ENCODE measurements at regions of chr10 and their contacts with region 1.

Region 1: GRCh38 chr10:114304017-114304570 is 65.0 kb downstream of the VWA2 start:
- DNase-seq: peak; percentile 85
- ATAC-seq: peak; percentile 59
- H3K4me3 Mint-ChIP-seq: peak overlapping the region; percentile 87
- H3K27ac Mint-ChIP-seq: peak overlapping the region; percentile 69
- H3K4me1 Mint-ChIP-seq: peaks cover 13% of the 10 kb centered on the region
- H3K27me3 Mint-ChIP-seq: no peaks in the 10 kb centered on the region

Region 2: DNA sequence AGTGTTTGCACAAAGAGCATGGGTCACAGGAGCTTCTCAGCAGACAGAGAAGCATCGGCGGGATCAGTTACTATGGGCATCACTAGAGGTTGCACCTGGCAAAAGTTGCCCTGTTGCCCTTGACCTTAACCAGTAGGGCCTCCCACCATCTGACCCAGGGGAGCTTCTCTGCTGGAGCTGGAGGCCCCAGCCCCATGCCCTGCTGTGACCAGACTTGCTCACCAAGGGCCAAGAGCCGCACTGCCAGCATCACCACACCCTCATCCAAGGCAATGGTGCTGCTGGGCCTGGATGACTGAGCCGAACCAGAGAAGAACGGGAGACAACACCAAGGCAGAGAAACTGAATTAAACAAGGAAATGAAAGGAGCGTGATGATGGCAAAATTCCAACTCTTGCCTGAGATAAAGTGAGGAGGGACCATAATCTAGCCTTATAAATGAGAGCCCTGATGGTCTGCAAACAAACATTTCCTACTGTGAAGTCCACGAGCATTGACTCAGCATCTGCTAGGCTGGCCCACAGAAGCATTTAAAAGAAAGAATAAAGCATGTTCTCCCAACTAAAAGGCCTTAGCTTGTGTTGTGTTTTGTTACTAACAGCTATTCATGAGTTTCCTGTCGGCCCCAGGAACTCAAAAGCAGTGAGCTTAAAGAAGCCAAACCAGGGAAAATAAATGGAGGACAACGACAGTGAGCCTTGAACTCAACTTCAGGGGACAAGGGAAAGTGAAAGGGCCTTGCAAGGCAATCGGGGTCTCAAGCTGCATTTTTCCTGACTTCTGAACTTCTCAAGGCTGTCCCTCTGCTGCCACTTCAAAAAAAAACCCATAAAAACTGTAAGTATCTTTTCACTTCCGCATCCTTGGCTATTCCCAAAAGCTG is 39.8 kb after region 1 on chr10:
- CTCF ChIA-PET with region 1: interaction called, 14 read pairs
- POLR2A ChIA-PET with region 1: no interaction called
- DNase-seq: no peak
- ATAC-seq: no peak
- H3K4me3 Mint-ChIP-seq: no peak overlapping the region
- H3K27ac Mint-ChIP-seq: no peak overlapping the region
- H3K4me1 Mint-ChIP-seq: no peaks in the 10 kb centered on the region
- H3K27me3 Mint-ChIP-seq: no peaks in the 10 kb centered on the region

Region 3: GRCh38 chr10:114427124-114427852 is 123.2 kb after region 1 on chr10:
- CTCF ChIA-PET with region 1: interaction called, 44 read pairs
- POLR2A ChIA-PET with region 1: interaction called, 3 read pairs
- DNase-seq: no peak
- ATAC-seq: no peak
- H3K4me3 Mint-ChIP-seq: no peak overlapping the region
- H3K27ac Mint-ChIP-seq: no peak overlapping the region
- H3K4me1 Mint-ChIP-seq: no peaks in the 10 kb centered on the region
- H3K27me3 Mint-ChIP-seq: peaks cover 3% of the 10 kb centered on the region

Region 4: DNA sequence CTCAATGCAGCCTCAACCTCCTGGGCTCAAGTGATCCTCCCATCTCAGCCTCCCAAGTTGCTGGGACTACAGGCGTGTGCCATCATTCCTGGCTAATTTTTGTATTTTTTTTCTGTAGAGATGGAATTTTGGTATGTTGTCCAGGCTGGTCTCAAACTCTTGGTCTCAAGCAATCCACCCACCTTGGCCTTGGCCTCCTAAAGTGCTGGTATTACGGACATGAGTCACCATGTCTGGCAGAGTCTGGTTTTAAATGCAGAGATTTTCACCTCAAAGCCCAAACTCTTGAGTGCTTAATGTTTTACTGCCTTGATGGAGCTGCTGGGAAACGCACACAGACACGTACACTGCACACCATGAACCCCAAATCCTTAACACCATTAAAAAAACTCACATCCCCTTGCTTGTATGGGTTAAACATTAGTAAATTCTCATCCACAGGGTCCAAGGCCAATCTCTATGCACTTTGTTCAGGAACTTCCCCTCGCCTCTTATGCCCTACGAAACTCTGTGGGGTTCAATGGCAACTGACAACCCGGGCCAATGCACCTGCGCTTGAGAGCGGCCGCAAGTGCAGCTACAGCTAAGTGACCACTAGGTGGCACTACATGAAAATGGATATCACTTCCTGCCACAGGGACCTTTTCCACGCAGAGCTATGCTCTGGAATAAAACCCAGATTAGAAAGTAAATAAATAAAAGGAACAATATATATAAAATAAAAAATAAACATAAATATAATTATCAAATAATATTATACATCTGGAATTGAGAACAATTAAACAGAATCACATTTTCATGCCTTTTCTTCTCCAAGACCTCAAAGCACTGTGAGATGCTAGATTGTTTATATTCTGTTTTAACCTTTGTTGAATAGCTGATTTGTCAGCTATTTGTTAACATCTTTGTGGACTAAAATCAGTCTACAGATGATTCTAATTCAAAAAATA is 167.1 kb after region 1 on chr10:
- CTCF ChIA-PET with region 1: interaction called, 43 read pairs
- POLR2A ChIA-PET with region 1: no interaction called
- DNase-seq: peak; percentile 77
- ATAC-seq: peak; percentile 95
- H3K4me3 Mint-ChIP-seq: no peak overlapping the region
- H3K27ac Mint-ChIP-seq: no peak overlapping the region
- H3K4me1 Mint-ChIP-seq: peaks cover 16% of the 10 kb centered on the region
- H3K27me3 Mint-ChIP-seq: no peaks in the 10 kb centered on the region

Region 5: DNA sequence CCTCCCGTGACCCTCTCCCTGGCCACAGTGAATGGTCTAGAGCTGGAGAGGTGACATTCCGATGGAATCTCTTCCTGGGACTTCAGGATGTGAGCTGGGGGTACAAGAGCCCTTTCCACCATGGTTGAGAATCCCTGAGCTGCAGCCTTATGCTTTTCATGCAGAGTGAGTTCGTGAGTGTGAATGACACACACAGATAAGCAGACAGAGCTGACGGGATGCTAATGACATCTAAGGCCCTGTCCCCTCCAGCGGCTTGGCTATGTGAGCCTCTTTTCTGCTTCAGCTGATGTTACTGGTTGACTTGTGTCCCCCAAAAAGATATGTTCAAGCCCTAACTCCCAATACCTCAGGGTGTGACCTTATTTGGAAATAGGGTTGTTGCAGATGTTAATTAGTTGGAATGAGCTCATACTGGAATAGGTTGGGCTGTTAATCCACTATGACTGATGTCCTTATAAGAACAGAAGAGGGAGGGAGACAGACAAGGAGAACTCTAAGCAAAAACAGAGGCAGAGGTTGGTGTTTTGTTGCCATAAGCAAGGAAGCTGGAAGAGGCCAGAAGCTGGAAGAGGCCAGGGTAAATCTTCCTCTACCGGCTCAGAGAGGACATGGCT is 211.3 kb after region 1 on chr10:
- CTCF ChIA-PET with region 1: interaction called, 10 read pairs
- POLR2A ChIA-PET with region 1: no interaction called
- DNase-seq: no peak
- ATAC-seq: no peak
- H3K4me3 Mint-ChIP-seq: no peak overlapping the region
- H3K27ac Mint-ChIP-seq: peak overlapping the region; percentile 1
- H3K4me1 Mint-ChIP-seq: peaks cover 90% of the 10 kb centered on the region
- H3K27me3 Mint-ChIP-seq: no peaks in the 10 kb centered on the region

Region 6: DNA sequence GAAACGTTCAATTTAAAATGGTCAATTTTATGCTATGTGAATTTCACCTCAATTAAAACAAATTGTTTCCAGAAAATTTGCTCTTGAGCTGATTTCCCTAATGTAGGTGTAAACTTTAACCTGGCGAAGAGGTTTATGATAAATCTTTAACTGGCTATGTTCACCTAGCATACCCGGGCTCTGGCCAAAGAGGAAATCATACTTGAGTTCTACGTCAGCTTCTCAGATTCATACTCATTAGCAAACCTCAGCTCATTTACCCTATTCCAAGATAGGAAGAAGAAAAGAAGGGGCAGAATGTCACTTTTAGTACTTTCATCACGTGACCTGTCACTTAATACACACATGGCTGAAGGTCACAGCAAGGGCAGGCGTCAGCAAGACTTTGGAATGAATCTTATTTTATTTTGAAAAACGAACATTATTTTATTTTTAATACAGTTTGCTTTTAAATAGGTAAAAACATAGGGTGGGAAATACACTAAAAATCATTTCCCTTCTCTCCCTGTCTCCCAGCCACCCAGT is 257.0 kb after region 1 on chr10:
- CTCF ChIA-PET with region 1: no interaction called
- POLR2A ChIA-PET with region 1: no interaction called
- DNase-seq: no peak
- ATAC-seq: no peak
- H3K4me3 Mint-ChIP-seq: no peak overlapping the region
- H3K27ac Mint-ChIP-seq: no peak overlapping the region
- H3K4me1 Mint-ChIP-seq: no peaks in the 10 kb centered on the region
- H3K27me3 Mint-ChIP-seq: no peaks in the 10 kb centered on the region

Region 7: DNA sequence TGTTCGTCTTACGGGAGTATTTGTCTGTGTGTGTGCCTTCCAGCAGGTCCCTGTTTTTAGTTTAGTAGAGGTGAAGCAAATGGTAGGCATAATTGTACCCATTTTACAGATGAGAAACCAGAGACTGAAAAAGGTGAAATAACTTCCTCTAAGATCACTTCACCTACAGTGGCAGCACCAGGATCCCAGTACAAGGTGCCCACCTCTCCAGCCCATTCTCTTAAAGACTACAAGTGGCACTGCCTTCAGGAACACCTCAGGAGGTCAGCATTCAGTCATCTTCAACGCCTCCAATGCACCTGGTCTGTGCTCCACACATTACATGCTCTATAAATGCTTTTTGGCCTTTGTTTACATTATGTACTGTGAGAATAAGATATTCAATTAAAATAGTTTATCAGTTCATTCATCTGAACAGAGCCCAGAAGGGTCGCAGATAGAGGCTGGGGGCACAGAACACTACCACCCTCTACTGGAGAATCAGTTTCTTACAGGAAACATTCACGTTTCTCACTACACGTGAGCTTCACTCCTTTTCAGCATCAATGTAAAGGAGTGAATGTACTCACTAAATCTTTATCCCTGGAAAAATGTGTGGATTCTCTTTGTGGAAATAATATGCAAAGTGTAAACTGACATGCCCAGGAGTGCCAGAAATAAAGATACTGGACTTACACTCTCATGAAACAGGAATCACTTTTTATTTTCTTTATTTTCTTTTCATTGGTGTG is 399.4 kb after region 1 on chr10:
- CTCF ChIA-PET with region 1: interaction called, 16 read pairs
- POLR2A ChIA-PET with region 1: no interaction called
- DNase-seq: peak; percentile 30
- ATAC-seq: peak; percentile 36
- H3K4me3 Mint-ChIP-seq: no peak overlapping the region
- H3K27ac Mint-ChIP-seq: no peak overlapping the region
- H3K4me1 Mint-ChIP-seq: no peaks in the 10 kb centered on the region
- H3K27me3 Mint-ChIP-seq: peaks cover 23% of the 10 kb centered on the region